Breast epithelium (tissue), 4 donors: ENCODE measurements at regions of chr12 and their contacts with region 1.

Region 1: GRCh38 chr12:110920324-110920910 is at the start of gene MYL2:
- DNase-seq: no peak
- H3K4me3 ChIP-seq: no peak within 1 kb of the TSS
- H3K27ac ChIP-seq: no peak within 1 kb of the TSS
- H3K4me1 ChIP-seq: no peaks in the 10 kb centered on the region
- H3K27me3 ChIP-seq: peaks cover 0 to 7% of the 10 kb centered on the region in 2 donors
- CTCF ChIP-seq: no peak
- POLR2A ChIP-seq: no peak
- total RNA-seq, gene MYL2: not detected

Region 2: DNA sequence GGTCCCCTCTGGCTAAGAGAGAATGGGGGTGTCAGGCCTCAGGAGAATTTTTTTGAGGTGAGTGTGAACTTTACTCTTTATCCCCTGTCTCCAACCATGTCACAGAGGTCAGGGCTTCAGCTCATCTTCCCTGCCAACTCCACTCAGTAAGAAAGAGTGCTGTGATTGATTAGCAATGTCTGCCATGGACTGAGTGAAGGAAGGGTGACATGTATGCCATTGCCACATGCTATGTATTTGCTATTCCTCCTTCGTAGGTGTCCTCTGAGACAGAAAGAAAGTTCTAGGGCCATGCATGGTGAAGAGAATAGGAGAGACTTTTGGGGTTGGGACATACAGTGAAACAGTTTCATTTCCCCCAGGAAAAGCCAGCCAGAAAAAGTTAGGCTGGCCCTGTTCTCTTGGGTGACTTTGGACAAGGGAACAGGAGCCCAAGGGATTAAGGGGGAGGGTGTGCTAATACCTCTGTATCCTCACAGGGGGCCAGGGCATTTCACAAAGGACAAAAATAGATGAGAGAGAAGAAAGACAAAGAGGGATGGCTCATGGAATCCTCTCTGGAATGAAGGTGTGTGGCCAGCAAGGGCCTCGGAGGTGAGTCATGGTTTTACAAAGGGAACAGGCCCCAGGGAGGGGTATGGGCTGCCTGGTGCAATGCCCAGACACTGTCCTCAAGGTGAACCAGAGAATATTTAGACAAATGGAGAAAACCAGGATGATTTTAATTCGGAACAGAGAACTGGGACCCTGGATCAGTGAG is 13.9 kb after region 1 on chr12:
- intact Hi-C with region 1: loop called (anchors 1 kb)
- DNase-seq: peak in 1 of 2 donors; percentile 51
- H3K4me3 ChIP-seq: no peak overlapping the region
- H3K27ac ChIP-seq: no peak overlapping the region
- H3K4me1 ChIP-seq: no peaks in the 10 kb centered on the region
- H3K27me3 ChIP-seq: peaks cover 0 to 5% of the 10 kb centered on the region in 2 donors
- CTCF ChIP-seq: no peak
- POLR2A ChIP-seq: no peak